Heart right ventricle (tissue), 16 donors: ENCODE measurements at regions of chr6 and their contacts with region 1.

Region 1: DNA sequence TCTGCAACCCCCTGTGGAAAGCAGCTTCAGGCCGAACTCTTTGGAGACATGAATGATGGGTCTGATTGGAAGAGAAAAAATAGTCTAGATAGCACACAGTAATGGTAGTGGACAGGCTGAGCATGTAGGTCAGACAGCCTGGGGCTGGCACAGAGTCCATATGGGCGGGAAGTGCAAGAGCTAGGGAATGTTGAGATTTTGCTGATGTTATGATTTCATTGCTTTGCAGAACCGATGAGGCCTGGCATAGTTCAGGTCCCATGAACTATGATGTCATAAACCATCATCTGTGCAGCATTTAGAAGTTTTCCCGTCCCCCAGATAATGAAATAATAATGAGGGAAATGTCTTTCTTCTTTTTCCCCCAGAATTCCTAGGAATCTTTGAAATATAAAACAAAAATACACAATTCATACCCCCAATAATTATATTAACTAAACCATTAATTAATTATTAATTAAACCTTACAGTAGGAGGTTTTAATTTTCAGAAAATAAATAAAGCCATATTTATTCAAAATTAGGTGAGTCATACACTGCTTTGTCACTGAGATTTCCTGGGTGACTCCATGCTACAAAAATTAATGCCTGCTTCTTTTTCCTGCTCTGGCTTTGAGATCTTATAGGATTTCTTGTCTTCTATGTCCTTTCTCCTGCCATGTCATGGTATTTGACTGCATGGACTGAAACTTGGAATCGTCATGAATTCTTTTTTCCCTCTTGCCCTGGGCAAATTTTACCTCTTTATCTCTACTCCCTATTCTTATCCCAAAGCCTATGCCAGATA is 133.0 kb downstream of the PHACTR1 start:
- DNase-seq: no peak
- ATAC-seq: no peak
- H3K4me3 ChIP-seq: no peak overlapping the region
- H3K27ac ChIP-seq: no peak overlapping the region
- H3K4me1 ChIP-seq: no peaks in the 10 kb centered on the region
- H3K27me3 ChIP-seq: peaks cover 0 to 31% (median 9%) of the 10 kb centered on the region in 7 donors
- CTCF ChIP-seq: no peak

Region 2: GRCh38 chr6:12827921-12828320 is 21.7 kb before region 1 on chr6:
- intact Hi-C with region 1: loop called in 1 of 10 experiments (anchors 1 kb)
- DNase-seq: no peak
- ATAC-seq: no peak
- H3K4me3 ChIP-seq: no peak overlapping the region
- H3K27ac ChIP-seq: no peak overlapping the region
- H3K4me1 ChIP-seq: no peaks in the 10 kb centered on the region
- H3K27me3 ChIP-seq: peaks cover 0 to 25% (median 7%) of the 10 kb centered on the region in 7 donors
- CTCF ChIP-seq: no peak